ENCODE measurements at regions of chr22 and their contacts with region 1.

Region 1: GRCh38 chr22:31036671-31037550 is 44.2 kb upstream of the SMTN start:
- DNase-seq: peak in 1 of 2 donors; percentile 81
- H3K4me3 ChIP-seq: peak overlapping the region in 1 of 2 donors; percentile 40
- H3K27ac ChIP-seq: peak overlapping the region; percentile 87 to 89
- H3K4me1 ChIP-seq: peaks cover 14 to 43% of the 10 kb centered on the region in 2 donors
- H3K27me3 ChIP-seq: no peaks in the 10 kb centered on the region
- CTCF ChIP-seq: peak in 1 of 3 experiments; percentile 10

Region 2: DNA sequence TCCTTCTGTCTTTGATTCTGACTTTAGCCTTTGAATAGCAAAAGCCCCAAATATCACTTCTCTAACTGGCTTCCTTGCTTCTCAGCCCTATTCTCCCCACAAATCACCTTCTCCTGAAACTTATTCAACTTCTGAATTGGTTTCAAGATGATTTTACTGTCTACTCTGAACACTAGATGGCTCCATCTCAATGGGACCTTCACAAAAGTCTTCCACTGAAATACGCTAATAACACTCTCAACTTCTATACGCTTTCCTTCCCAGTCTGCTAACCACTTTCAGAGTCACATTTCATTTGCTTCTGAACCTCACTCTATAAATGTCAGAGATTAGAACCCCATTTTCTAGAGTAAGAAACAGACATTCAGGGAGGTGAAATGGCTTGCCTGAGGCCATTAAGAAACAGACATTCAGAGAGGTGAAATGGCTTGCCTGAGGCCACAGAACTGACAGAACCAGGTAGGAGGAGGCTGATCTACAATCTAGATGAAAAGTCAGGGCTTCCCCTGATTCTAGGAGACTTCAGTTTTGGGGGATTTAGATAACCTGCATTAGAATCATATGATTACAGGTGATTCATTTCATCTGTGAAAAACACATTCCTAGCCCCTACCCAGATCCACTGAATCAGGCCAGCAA is 89.0 kb before region 1 on chr22:
- intact Hi-C with region 1: loop called (anchors 2 kb)
- DNase-seq: no peak
- H3K4me3 ChIP-seq: peak overlapping the region in 1 of 2 donors; percentile 10
- H3K27ac ChIP-seq: peak overlapping the region; percentile 88 to 96
- H3K4me1 ChIP-seq: peaks cover 21 to 85% of the 10 kb centered on the region in 2 donors
- H3K27me3 ChIP-seq: no peaks in the 10 kb centered on the region
- CTCF ChIP-seq: peak; percentile 49 to 64 (median 59)

Region 3: GRCh38 chr22:30968924-30969539 is 67.9 kb before region 1 on chr22 and contains the start of gene TUG1:
- intact Hi-C with region 1: loop called (anchors 5 kb)
- DNase-seq: peak; percentile 97 to 99
- H3K4me3 ChIP-seq: peak within 1 kb of the TSS; percentile 84 to 96
- H3K27ac ChIP-seq: peak within 1 kb of the TSS; percentile 96
- H3K4me1 ChIP-seq: peaks cover 4 to 16% of the 10 kb centered on the region in 2 donors
- H3K27me3 ChIP-seq: no peaks in the 10 kb centered on the region
- CTCF ChIP-seq: no peak
- total RNA-seq, gene TUG1: 46.2 TPM

Region 4: GRCh38 chr22:30992565-30992964 is 44.3 kb before region 1 on chr22:
- intact Hi-C with region 1: loop called (anchors 5 kb)
- DNase-seq: no peak
- H3K4me3 ChIP-seq: no peak overlapping the region
- H3K27ac ChIP-seq: peak overlapping the region; percentile 75 to 83
- H3K4me1 ChIP-seq: peaks cover 0 to 21% of the 10 kb centered on the region in 2 donors
- H3K27me3 ChIP-seq: no peaks in the 10 kb centered on the region
- CTCF ChIP-seq: no peak

Region 5: GRCh38 chr22:31005535-31005934 is 31.4 kb before region 1 on chr22:
- intact Hi-C with region 1: no loop called
- DNase-seq: no peak
- H3K4me3 ChIP-seq: no peak overlapping the region
- H3K27ac ChIP-seq: no peak overlapping the region
- H3K4me1 ChIP-seq: no peaks in the 10 kb centered on the region
- H3K27me3 ChIP-seq: no peaks in the 10 kb centered on the region
- CTCF ChIP-seq: no peak

Region 6: DNA sequence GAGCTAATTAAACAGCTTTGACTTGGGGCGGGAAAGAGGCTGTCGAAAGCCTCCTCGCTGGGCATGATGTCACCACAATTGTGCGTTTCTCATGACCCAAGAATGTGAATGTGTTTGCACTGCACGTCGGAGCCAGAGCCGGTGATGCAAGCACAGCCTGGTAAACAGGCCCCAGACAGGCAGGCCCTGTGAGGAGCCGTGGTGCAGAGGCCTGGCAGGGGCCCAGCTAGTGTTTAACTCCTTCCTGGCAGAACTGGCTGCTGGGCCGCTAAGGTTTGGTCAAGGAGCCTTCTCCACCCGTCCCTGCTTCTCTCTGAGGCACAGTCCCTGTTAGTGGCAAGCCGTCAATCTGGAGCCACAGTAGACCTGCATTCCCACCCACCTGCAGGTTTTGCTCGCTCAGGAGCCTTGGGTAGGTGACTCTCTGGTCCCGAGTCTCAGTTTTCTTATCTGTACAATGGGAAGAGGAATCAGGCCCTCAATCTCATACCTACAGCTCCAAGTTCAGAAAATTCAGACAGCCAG is 18.8 kb after region 1 on chr22:
- intact Hi-C with region 1: loop called (anchors 2 kb)
- DNase-seq: peak; percentile 76 to 97
- H3K4me3 ChIP-seq: no peak overlapping the region
- H3K27ac ChIP-seq: peak overlapping the region; percentile 89 to 91
- H3K4me1 ChIP-seq: peaks cover 6 to 32% of the 10 kb centered on the region in 2 donors
- H3K27me3 ChIP-seq: no peaks in the 10 kb centered on the region
- CTCF ChIP-seq: no peak

Region 7: DNA sequence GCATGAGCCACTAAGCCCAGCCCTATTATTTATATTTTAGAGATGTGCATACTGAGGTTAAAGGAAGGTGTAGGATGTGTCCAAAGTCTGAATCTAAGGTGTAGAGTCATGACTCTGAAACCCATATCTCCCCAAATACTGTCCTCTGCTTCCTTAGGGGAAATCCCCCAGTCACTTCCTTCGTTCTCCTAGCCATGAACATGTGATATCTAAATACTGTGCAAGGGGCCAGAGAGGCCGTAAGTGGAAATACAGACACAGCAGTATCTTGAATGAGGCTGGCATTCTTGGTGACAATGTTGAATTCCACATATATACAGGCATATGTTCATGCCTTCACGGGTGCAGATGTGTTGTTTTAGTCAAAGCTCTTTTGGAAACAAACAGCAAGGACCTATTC is 330.5 kb after region 1 on chr22:
- intact Hi-C with region 1: no loop called
- DNase-seq: no peak
- H3K4me3 ChIP-seq: no peak overlapping the region
- H3K27ac ChIP-seq: no peak overlapping the region
- H3K4me1 ChIP-seq: no peaks in the 10 kb centered on the region
- H3K27me3 ChIP-seq: no peaks in the 10 kb centered on the region
- CTCF ChIP-seq: no peak